Right cardiac atrium (tissue), 5 donors: ENCODE measurements at regions of chr6 and their contacts with region 1.

Region 1: DNA sequence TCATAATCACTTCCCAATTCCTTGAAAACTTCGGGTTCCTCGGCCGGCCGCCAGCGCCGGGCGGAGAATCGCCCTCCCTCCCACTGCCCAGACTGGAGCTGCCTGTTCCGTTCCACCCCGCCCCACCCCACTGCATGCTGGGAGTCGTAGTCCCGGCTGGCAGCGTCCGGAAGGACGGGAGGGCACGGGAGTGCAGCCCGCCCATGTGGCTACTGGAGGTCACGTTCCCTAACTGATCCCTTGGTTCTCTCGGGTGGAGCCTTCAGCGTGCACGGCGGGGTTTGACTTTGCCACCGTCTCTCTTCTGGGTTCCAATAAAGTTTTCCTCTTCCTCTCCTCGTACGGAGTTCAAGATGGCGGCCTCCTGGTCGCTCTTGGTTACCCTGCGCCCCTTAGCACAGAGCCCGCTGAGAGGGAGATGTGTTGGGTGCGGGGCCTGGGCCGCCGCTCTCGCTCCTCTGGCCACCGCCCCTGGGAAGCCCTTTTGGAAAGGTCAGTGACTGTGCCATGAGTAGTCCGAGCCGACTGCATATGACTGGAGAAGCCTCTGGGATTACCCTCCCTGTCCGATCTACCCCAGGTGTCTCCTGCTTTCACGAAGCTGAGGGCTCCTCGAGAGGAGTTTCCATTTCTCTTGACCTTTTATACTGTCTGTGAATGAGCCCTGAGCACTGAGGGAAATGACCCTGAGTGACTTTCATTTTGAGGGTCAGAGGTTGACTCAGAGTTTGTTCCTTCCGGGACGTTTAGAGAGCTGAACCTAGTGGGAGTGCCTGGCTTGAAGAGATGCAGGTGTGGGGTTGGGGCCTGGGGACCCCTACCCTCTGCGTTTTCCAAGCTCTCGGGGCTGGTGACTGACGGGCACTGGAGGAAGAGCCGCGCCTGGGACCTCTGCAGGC is at the start of gene AFG1L:
- DNase-seq: peak; percentile 95 to 98 (median 97)
- ATAC-seq: peak; percentile 100
- H3K4me3 ChIP-seq: peak within 1 kb of the TSS; percentile 86
- H3K27ac ChIP-seq: peak within 1 kb of the TSS; percentile 77
- H3K4me1 ChIP-seq: no peaks in the 10 kb centered on the region
- H3K27me3 ChIP-seq: no peaks in the 10 kb centered on the region
- total RNA-seq, gene AFG1L: 8.9 to 14.5 (median 10.5) TPM

Region 2: DNA sequence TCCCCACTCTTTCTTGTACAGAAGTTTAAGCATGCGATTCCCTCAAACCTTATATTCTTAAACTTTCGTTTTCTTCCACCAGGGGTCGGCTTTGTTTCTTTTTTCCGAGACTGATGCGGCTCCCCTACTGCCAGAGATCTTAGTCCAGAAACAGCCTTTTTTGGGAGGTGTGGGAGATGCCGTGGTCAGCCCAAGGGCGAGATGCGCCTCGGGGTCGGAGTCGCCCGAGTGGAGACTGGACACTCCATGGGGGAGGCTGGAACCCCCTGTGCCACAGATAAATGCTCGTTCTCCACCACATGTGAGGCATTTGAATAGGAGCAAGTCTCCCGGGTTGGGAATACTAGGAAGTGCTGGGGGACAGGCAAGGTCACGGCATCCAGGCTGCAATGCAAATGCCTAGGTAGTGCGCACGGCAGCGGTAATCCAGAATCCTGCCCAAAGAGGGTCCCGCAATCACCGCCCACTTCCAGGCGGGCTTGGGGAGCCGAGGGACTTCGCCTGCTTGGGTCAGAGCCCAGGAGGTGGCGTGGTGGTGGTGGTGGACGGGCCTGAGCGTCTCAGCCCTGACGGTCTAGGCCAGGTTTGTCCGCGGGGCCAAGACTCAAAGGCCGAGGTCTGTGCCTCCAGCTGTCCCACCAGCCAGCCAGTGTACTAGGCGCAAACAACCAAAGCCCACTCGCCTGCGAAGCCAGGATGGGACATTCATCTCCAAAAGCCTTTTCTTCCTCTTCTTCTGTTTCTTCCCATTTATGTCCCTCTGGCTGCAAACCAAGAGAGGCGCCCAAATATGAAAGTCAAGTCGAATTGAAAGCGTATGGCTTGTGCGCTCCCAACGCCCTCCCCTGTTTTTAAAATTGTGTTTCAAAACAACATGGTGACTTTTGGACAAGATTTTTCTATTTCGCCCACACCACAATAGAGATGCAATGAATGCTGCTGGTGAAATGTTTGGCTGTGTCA is 181.1 kb before region 1 on chr6:
- intact Hi-C with region 1: no loop called
- DNase-seq: peak in 2 of 3 donors; percentile 20 to 56
- ATAC-seq: peak; percentile 18 to 37
- H3K4me3 ChIP-seq: peak overlapping the region; percentile 18
- H3K27ac ChIP-seq: no peak overlapping the region
- H3K4me1 ChIP-seq: peaks cover 2% of the 10 kb centered on the region
- H3K27me3 ChIP-seq: no peaks in the 10 kb centered on the region

Region 3: GRCh38 chr6:108260809-108261569 is 34.0 kb before region 1 on chr6 and contains the start of gene SNX3:
- intact Hi-C with region 1: loop called in 1 of 4 experiments (anchors 2 kb)
- DNase-seq: peak; percentile 97 to 98 (median 97)
- ATAC-seq: peak; percentile 98 to 99
- H3K4me3 ChIP-seq: peak within 1 kb of the TSS; percentile 75
- H3K27ac ChIP-seq: peak within 1 kb of the TSS; percentile 96
- H3K4me1 ChIP-seq: no peaks in the 10 kb centered on the region
- H3K27me3 ChIP-seq: no peaks in the 10 kb centered on the region
- total RNA-seq, gene SNX3: 203 to 265 (median 229) TPM